ENCODE measurements at regions of chr11 and their contacts with region 1.

Region 1: DNA sequence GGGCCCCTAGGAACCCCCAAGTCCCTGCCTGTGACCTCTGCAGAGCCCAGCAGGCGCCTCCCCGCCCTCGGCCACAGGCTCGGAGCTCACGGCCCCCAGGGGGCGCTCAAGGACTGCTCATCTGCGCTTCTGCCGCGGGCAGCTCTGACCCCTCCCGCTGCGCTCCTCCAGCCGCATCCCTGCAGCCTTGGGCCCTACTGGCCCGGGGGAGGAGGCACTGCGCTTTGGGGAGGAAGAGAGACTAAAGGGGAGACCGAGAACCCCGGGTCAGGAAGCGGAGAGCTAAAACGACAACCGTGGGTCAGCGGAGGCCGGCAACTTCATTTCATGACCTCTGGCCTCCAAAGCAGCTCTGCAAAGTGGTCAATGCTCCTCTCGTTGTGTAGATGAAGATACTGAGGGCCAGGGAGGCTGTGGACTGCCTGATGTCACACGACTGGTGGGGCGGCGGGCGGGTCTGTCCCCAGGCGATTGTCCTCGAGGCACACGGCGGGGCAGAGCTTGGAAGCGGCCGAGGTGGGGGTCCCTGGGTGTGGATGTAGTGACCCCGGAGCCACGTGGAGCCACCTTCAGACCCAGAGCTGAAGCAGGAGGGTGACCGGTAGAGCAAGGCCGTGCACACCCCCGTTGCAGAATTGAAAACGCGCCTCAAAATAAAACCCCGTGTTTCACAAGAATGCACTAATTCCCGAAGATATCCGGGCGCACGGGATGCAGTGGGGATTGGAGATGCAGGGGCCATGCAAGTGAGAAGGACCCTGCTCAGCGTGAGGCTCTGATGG is 2.7 kb upstream of the KRTAP5-6 start:
- DNase-seq: peak; percentile 80 to 88
- ATAC-seq: peak; percentile 82 to 95
- H3K4me3 ChIP-seq: peak overlapping the region; percentile 62
- H3K27ac ChIP-seq: peak overlapping the region; percentile 87 to 92
- H3K4me1 ChIP-seq: no peaks in the 10 kb centered on the region
- CTCF ChIP-seq: peak; percentile 88
- EP300 ChIP-seq: no peak
- POLR2A ChIP-seq: no peak
- RAD21 ChIP-seq: peak; percentile 94 to 99

Region 2: GRCh38 chr11:1714973-1715885 is 21.0 kb after region 1 on chr11:
- CTCF ChIA-PET with region 1: interaction called, 97 read pairs
- POLR2A ChIA-PET with region 1: no interaction called
- DNase-seq: no peak
- ATAC-seq: no peak
- H3K4me3 ChIP-seq: no peak overlapping the region
- H3K27ac ChIP-seq: no peak overlapping the region
- H3K4me1 ChIP-seq: no peaks in the 10 kb centered on the region
- CTCF ChIP-seq: no peak
- EP300 ChIP-seq: no peak
- POLR2A ChIP-seq: no peak
- RAD21 ChIP-seq: no peak

Region 3: DNA sequence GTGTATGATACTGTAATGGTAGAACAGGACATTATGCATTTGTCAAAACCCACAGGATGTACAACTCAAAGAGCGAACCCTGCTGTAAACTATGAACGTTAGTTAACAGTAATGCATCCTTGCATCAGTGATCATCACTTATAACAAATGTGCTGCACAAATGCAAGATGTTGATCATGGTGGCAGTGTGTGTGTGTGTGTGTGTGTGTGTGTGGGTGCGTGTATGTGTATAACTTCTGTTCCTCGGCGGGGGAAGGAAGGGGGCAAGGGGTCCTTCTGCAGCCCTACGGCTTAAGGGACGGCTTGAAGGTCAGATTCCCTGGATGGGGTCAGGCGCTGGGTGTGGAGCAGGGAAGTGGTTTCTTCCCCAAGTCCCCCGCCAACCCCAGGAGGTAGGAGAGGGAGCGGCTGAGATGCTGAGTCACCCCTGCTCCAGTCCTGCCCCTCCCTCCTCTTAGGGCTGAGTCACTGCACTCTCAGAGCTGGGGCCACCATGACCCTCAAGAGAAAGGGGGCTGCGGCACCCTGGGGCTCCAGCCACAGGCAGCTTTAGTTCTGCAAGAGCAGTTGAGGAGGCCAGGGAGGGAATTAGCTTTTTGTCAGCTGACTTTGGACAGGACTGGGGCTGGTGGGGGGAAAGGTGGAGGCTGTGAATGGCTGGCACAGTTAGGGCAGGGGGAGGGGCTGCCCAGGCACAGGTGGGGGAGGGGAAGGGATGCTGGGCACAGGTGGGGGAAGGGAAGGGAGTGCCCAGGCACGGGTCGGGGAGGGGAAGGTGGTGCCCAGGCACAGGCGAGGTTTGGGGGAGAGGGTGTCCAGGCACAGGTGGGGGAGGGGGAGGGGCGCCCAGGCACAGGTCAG is 78.2 kb after region 1 on chr11:
- CTCF ChIA-PET with region 1: interaction called, 12 read pairs
- POLR2A ChIA-PET with region 1: no interaction called
- DNase-seq: peak; percentile 94 to 95
- ATAC-seq: peak; percentile 95 to 98
- H3K4me3 ChIP-seq: no peak overlapping the region
- H3K27ac ChIP-seq: peak overlapping the region; percentile 97 to 99
- H3K4me1 ChIP-seq: peaks cover 42% of the 10 kb centered on the region
- CTCF ChIP-seq: no peak
- EP300 ChIP-seq: peak in 1 of 2 experiments; percentile 54; a peak in 1 of 5 replicates
- POLR2A ChIP-seq: no peak
- RAD21 ChIP-seq: no peak

Region 4: GRCh38 chr11:1832211-1832919 is 138.1 kb after region 1 on chr11:
- CTCF ChIA-PET with region 1: interaction called, 605 read pairs
- POLR2A ChIA-PET with region 1: interaction called, 39 read pairs
- DNase-seq: peak; percentile 44 to 69
- ATAC-seq: peak; percentile 41 to 83; a peak in 3 of 6 replicates
- H3K4me3 ChIP-seq: peak overlapping the region; percentile 27
- H3K27ac ChIP-seq: peak overlapping the region; percentile 73 to 89
- H3K4me1 ChIP-seq: peaks cover 66% of the 10 kb centered on the region
- CTCF ChIP-seq: peak; percentile 99
- EP300 ChIP-seq: no peak
- POLR2A ChIP-seq: no peak
- RAD21 ChIP-seq: peak; percentile 80 to 99

Region 5: DNA sequence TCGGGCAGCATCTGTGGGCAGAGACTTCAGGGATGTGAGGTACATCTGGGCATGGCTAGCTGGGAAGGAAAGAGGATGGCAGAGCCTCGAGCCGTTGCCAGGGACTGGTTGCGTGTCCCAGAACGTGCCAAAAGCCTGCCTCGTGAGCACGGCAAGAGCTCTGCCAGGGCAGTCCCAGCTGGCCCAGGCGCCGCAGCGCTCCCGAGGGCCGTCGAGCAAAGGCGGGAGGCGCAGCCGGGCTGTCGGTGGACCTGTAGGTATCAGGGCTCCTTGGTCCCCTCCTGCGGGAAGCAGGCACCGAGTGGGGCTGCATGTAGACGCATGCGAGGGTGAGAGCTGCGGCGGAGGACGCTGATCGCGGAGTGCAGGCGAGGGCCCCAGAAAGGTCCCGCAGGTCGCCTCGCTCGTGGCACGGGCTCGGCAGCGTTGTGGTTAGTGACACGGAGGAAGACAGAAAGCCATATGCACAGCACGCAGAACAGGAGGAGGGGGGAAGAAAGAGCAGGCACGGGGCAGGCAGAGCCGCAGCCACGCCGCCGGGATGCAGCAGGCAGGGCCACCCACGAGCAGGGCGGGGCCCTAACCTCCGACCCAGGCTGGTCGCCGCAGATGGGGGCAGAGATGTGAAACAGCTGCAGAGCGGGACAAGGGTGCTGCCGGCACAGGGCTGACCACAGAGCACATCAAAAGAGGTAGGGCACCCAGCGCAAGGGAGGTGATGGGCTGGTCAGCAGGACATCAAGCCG is 176.6 kb after region 1 on chr11:
- CTCF ChIA-PET with region 1: interaction called, 25 read pairs
- POLR2A ChIA-PET with region 1: no interaction called
- DNase-seq: no peak
- ATAC-seq: peak in 1 of 2 experiments; percentile 34; a peak in 3 of 6 replicates
- H3K4me3 ChIP-seq: no peak overlapping the region
- H3K27ac ChIP-seq: peak overlapping the region in 1 of 2 experiments; percentile 56; a peak in 3 of 6 replicates
- H3K4me1 ChIP-seq: peaks cover 25% of the 10 kb centered on the region
- CTCF ChIP-seq: no peak
- EP300 ChIP-seq: no peak
- POLR2A ChIP-seq: no peak
- RAD21 ChIP-seq: no peak

Region 6: GRCh38 chr11:1917671-1918516 is 223.6 kb after region 1 on chr11:
- CTCF ChIA-PET with region 1: interaction called, 14 read pairs
- POLR2A ChIA-PET with region 1: no interaction called
- DNase-seq: no peak
- ATAC-seq: peak; percentile 52 to 76; a peak in 5 of 6 replicates
- H3K4me3 ChIP-seq: no peak overlapping the region
- H3K27ac ChIP-seq: no peak overlapping the region
- H3K4me1 ChIP-seq: no peaks in the 10 kb centered on the region
- CTCF ChIP-seq: no peak
- EP300 ChIP-seq: no peak
- POLR2A ChIP-seq: no peak
- RAD21 ChIP-seq: no peak

Measured in A549 (cell line).